Sigmoid colon (tissue), 7 donors: ENCODE measurements at regions of chr7 and their contacts with region 1.

Region 1: GRCh38 chr7:140517546-140518369 is 38.5 kb upstream of the MKRN1 start:
- DNase-seq: peak; percentile 95
- H3K4me3 ChIP-seq: no peak overlapping the region
- H3K27ac ChIP-seq: peak overlapping the region; percentile 55 to 78 (median 68)
- H3K4me1 ChIP-seq: peaks cover 0 to 24% (median 13%) of the 10 kb centered on the region in 4 donors
- H3K27me3 ChIP-seq: no peaks in the 10 kb centered on the region
- CTCF ChIP-seq: peak; percentile 76 to 94 (median 88)
- EP300 ChIP-seq: no peak
- POLR2A ChIP-seq: no peak

Region 2: GRCh38 chr7:140435252-140435895 is 82.4 kb before region 1 on chr7:
- intact Hi-C with region 1: no loop called
- DNase-seq: peak; percentile 40
- H3K4me3 ChIP-seq: peak overlapping the region in 3 of 4 donors; percentile 12 to 27 (median 24)
- H3K27ac ChIP-seq: no peak overlapping the region
- H3K4me1 ChIP-seq: no peaks in the 10 kb centered on the region
- H3K27me3 ChIP-seq: no peaks in the 10 kb centered on the region
- CTCF ChIP-seq: no peak
- EP300 ChIP-seq: no peak
- POLR2A ChIP-seq: no peak

Region 3: DNA sequence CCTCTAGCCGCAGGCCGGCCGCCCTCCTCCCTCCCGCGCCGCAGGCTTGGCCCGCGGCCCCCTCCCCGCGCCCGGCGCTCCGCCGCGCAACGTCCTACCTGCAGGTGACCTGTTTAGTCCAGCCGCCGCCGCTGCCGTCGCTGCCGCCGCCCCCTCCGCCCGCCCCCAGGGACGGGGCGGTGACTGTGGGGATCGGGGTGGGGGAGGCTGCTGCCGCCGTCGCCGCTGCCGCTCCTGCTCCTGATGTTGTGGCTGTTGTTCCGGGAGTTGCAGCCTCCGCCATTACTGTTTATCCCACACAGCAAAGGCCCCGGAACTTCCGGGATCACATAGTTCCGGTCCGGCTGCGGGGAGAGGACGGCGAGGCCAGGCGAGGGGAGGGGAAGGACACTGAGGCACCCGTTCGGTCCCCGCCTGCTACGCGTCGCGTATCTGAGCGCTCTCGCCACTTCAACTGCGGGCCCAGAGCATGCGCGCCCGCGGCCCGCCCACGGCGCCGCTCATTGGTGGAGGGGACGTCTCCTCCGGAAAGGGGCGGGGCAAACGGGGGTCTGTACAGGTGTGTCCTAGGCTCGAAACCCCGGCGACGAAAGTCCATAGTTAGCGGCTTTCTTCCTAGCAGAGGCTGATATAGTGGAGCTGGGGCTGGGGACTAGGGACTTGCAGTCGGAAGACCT is 38.6 kb before region 1 on chr7 and contains the start of gene MKRN1:
- intact Hi-C with region 1: loop called (anchors 5 kb)
- DNase-seq: peak; percentile 96
- H3K4me3 ChIP-seq: peak within 1 kb of the TSS; percentile 86 to 99 (median 98)
- H3K27ac ChIP-seq: peak within 1 kb of the TSS; percentile 87 to 96 (median 90)
- H3K4me1 ChIP-seq: peaks cover 0 to 34% (median 22%) of the 10 kb centered on the region in 4 donors
- H3K27me3 ChIP-seq: no peaks in the 10 kb centered on the region
- CTCF ChIP-seq: no peak
- EP300 ChIP-seq: no peak
- POLR2A ChIP-seq: peak; percentile 47 to 79
- total RNA-seq, gene MKRN1: 63.5 to 73.7 (median 69.4) TPM

Region 4: DNA sequence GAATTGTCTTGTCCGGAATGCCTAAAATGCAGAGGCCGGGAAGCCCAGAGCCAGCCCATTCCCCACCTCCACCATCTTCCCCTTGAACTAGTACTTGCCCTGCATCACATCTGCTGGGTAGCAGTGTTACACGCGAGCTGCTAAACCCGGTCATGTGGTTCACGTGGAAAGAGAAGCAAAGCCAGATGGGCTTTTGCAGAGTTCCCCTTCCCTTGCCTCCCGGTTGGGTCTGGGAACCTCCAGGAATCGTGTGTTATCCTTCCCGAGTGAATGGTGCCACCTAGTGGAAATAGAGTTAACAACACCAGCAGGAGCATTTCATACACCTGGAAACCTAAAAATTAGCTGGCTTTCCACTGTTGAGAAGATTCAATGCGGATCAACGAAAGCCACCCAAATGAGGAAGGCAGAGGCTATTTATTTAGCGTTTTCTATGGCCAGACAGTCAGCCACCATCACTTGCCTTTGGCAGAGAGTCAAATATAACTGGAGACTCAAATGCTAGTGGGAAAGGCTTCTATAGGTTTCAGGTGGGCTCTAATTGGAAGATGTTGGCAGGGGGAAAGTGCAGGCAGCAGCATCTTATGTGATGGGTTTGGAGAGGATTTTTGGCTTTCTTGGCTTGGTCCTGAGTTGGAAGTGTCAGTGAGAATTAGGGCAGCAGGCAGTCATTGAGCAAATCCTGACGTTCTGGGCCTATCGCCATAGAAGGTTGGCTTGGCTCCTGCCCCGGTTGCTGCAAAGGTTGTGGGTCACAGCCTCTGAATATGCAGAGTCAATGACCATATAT is 135.8 kb after region 1 on chr7:
- intact Hi-C with region 1: loop called (anchors 1 kb)
- DNase-seq: peak; percentile 85
- H3K4me3 ChIP-seq: no peak overlapping the region
- H3K27ac ChIP-seq: peak overlapping the region in 1 of 4 donors; percentile 14
- H3K4me1 ChIP-seq: peaks cover 0 to 25% (median 17%) of the 10 kb centered on the region in 4 donors
- H3K27me3 ChIP-seq: no peaks in the 10 kb centered on the region
- CTCF ChIP-seq: peak; percentile 88 to 94 (median 89)
- EP300 ChIP-seq: no peak
- POLR2A ChIP-seq: no peak